GM12878 (cell line): ENCODE measurements at regions of chr6 and their contacts with region 1.

Region 1: GRCh38 chr6:52389626-52390360 is 27.8 kb downstream of the PAQR8 start:
- DNase-seq: peak; percentile 87
- ATAC-seq: peak; percentile 78
- H3K4me3 ChIP-seq: peak overlapping the region; percentile 43; the same call in 1 of the 2 replicates
- H3K27ac ChIP-seq: peak overlapping the region; percentile 94
- H3K4me1 ChIP-seq: peaks cover 63% of the 10 kb centered on the region
- H3K27me3 ChIP-seq: no peaks in the 10 kb centered on the region
- CTCF ChIP-seq: no peak; a peak in 1 of 6 replicates
- EP300 ChIP-seq: peak; percentile 66 to 69; a peak in 2 of 4 replicates
- POLR2A ChIP-seq: no peak
- RAD21 ChIP-seq: peak; percentile 10; the same call in 1 of the 2 replicates

Region 2: GRCh38 chr6:52297433-52297832 is 92.4 kb before region 1 on chr6:
- CTCF ChIA-PET with region 1: interaction called, 441 read pairs
- POLR2A ChIA-PET with region 1: interaction called, 16 read pairs
- RAD21 ChIA-PET with region 1: interaction called, 13 read pairs
- SMC1A ChIA-PET with region 1: interaction called, 47 read pairs
- in situ Hi-C with region 1: loop called (anchors 5 kb)
- intact Hi-C with region 1: no loop called
- DNase-seq: no peak
- ATAC-seq: peak; percentile 70
- H3K4me3 ChIP-seq: peak overlapping the region; percentile 19; the same call in 1 of the 2 replicates
- H3K27ac ChIP-seq: peak overlapping the region; percentile 86
- H3K4me1 ChIP-seq: peaks cover 51% of the 10 kb centered on the region
- H3K27me3 ChIP-seq: no peaks in the 10 kb centered on the region
- CTCF ChIP-seq: 0 out of 6 replicates have a peak, but pooled peaks of 1 of the 3 experiments have one; percentile 9
- EP300 ChIP-seq: no peak
- POLR2A ChIP-seq: no peak
- RAD21 ChIP-seq: peak; percentile 32; the same call in 1 of the 2 replicates

Region 3: GRCh38 chr6:52352239-52353008 is 37.4 kb before region 1 on chr6:
- CTCF ChIA-PET with region 1: interaction called, 5 read pairs
- POLR2A ChIA-PET with region 1: interaction called, 11 read pairs
- RAD21 ChIA-PET with region 1: interaction called, 18 read pairs
- SMC1A ChIA-PET with region 1: interaction called, 22 read pairs
- in situ Hi-C with region 1: no loop called
- intact Hi-C with region 1: loop called (anchors 1 kb)
- DNase-seq: peak; percentile 79
- ATAC-seq: peak; percentile 93
- H3K4me3 ChIP-seq: no peak overlapping the region
- H3K27ac ChIP-seq: peak overlapping the region; percentile 6; the same call in 1 of the 2 replicates
- H3K4me1 ChIP-seq: peaks cover 32% of the 10 kb centered on the region
- H3K27me3 ChIP-seq: no peaks in the 10 kb centered on the region
- CTCF ChIP-seq: no peak
- EP300 ChIP-seq: peak; percentile 22 to 66; a peak in 1 of 4 replicates
- POLR2A ChIP-seq: no peak
- RAD21 ChIP-seq: no peak

Region 4: GRCh38 chr6:52371656-52372191 is 18.1 kb before region 1 on chr6:
- CTCF ChIA-PET with region 1: interaction called, 34 read pairs
- POLR2A ChIA-PET with region 1: interaction called, 28 read pairs
- RAD21 ChIA-PET with region 1: interaction called, 32 read pairs
- SMC1A ChIA-PET with region 1: interaction called, 77 read pairs
- in situ Hi-C with region 1: no loop called
- intact Hi-C with region 1: no loop called
- DNase-seq: no peak
- ATAC-seq: no peak
- H3K4me3 ChIP-seq: no peak overlapping the region
- H3K27ac ChIP-seq: no peak overlapping the region
- H3K4me1 ChIP-seq: peaks cover 11% of the 10 kb centered on the region
- H3K27me3 ChIP-seq: no peaks in the 10 kb centered on the region
- CTCF ChIP-seq: no peak
- EP300 ChIP-seq: no peak
- POLR2A ChIP-seq: no peak
- RAD21 ChIP-seq: no peak

Region 5: DNA sequence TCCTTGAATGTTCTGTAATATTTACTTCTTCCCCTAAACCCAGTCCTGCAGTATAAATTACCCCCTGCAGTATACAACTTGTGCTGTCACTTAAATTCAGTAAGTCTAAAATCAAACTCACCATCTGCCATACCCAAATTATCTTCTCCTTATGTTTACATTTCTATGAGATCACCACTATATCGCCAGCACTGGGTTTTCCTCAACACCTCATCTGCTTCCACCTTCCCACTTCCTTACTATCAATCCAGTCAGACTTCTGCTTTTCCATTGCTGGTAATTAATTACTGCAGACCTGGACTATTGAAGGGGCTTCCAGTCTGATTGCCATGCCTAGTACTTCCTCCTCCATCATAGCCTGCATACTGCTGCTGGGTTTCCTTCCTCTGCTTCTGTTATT is 45.6 kb after region 1 on chr6:
- CTCF ChIA-PET with region 1: no interaction called
- POLR2A ChIA-PET with region 1: no interaction called
- RAD21 ChIA-PET with region 1: no interaction called
- SMC1A ChIA-PET with region 1: no interaction called
- in situ Hi-C with region 1: no loop called
- intact Hi-C with region 1: no loop called
- DNase-seq: no peak
- ATAC-seq: no peak
- H3K4me3 ChIP-seq: no peak overlapping the region
- H3K27ac ChIP-seq: no peak overlapping the region
- H3K4me1 ChIP-seq: no peaks in the 10 kb centered on the region
- H3K27me3 ChIP-seq: no peaks in the 10 kb centered on the region
- CTCF ChIP-seq: no peak
- EP300 ChIP-seq: no peak
- POLR2A ChIP-seq: no peak
- RAD21 ChIP-seq: no peak